HEK293 (cell line): ENCODE measurements at regions of chr19 and their contacts with region 1.

Region 1: GRCh38 chr19:11035441-11036377 is 53.6 kb upstream of the LDLR start:
- H3K4me3 ChIP-seq: no peak overlapping the region
- H3K27ac ChIP-seq: no peak overlapping the region
- H3K4me1 ChIP-seq: no peaks in the 10 kb centered on the region
- CTCF ChIP-seq: peak; percentile 84

Region 2: DNA sequence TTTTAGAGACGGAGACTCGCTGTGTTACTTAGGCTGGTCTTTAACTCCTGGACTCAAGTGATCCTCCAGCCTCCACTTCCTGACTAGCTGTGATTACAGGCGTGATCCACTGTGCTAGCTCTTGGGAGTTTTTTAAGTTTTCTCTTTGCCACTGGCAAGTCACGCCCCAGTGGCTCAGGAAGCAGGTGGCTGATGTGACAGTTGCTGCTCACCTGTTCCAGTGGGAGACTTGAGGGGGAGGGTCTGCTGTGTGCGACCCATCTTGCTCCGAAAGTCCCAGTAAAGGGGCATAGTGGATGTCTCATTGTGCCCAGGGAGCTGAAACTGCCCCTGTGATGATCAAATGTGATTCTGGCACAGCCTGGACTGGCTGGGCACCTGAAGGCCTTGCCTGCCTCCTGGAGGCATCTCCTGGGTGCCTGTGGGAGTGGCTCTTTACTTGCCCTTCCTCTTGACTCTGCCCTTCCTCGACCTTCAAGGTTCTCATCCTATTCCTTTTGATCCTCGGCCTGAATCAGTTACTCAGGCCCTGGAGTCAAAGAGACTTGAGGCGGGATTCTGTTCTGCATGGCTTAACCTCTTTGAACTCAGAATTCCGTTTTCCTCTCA is 67.1 kb before region 1 on chr19:
- CTCF ChIA-PET with region 1: no interaction called
- POLR2A ChIA-PET with region 1: no interaction called
- H3K4me3 ChIP-seq: no peak overlapping the region
- H3K27ac ChIP-seq: no peak overlapping the region
- H3K4me1 ChIP-seq: peaks cover 2% of the 10 kb centered on the region; the same call in 1 of the 2 replicates
- CTCF ChIP-seq: no peak

Region 3: GRCh38 chr19:11050323-11051114 is 14.8 kb after region 1 on chr19:
- CTCF ChIA-PET with region 1: interaction called, 14 read pairs
- POLR2A ChIA-PET with region 1: no interaction called
- H3K4me3 ChIP-seq: no peak overlapping the region
- H3K27ac ChIP-seq: no peak overlapping the region
- H3K4me1 ChIP-seq: no peaks in the 10 kb centered on the region
- CTCF ChIP-seq: no peak

Region 4: DNA sequence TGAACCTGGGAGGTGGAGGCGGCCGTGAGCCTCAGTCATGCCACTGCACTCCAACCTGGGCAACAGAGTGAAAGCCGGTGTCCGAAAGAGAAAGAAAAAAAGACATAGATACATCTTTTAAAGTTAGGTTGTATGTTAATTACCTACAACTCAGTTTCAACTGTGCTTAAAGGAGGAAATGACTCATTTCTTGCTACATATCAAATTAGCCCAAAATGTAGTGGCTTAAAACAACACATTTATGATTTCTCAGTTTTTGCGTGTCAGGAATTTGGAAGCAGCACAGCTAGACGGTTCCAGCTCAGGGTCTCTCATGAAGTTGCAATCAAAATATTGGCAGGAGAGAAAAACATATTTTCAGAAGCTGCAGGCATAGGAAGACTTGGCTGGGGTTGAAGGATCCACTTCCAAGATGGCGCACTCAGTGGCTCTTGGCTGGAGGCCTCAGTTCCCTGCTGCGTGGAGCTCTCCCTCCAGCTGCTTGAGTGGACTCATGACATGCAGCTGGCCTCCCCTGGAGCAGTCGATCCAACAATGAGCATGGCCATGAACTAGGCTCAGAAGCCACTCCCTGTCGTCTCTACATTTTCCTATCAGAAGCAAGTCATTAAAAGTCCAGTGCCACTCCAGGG is 60.6 kb after region 1 on chr19:
- CTCF ChIA-PET with region 1: interaction called, 18 read pairs
- POLR2A ChIA-PET with region 1: interaction called, 4 read pairs
- H3K4me3 ChIP-seq: no peak overlapping the region
- H3K27ac ChIP-seq: no peak overlapping the region
- H3K4me1 ChIP-seq: 0 out of 2 replicates have a peak, but pooled peaks cover 3% of the 10 kb centered on the region
- CTCF ChIP-seq: no peak

Region 5: DNA sequence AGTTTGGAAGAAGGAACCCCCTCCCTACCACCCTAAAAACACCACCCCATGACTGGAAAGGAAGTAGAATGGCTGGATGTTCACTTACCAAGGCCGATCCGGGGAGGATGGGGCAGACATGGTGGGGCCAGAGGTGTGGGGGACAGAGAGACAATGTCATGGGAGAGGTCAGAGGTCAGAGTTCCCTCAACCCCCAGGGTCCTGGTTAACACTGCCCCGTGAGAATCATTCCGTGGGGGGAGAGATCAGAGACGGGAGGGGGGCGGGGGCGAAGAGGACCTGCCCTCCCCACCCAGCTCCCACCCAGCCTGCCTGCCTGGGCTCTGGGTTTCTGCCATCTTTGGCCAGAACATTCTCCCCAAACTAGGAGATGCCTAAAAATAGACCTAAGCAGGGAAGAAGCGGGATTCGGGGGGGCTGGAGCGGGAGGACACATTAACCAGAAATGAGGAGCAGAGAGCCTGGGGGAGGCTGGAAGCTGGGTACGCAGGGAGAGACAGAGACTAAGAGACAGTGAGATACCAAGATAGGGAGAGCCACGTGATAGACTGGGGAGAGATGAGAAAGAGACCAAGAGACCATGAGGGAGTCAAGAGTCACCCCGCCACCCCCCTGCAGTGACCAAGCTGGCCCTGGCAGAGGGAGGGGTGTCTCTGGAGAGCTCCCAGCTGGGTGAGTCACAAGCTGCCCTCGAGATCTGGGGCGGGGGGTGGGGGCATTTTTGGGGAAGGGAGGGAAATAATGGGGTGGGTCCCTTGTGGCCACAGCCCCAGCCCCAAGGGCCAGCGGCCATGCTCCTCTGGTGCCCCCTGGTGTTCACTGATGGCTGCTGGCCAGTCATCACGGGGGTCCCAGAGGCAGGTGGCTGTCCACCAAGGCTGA is 167.7 kb after region 1 on chr19:
- CTCF ChIA-PET with region 1: interaction called, 13 read pairs
- POLR2A ChIA-PET with region 1: no interaction called
- H3K4me3 ChIP-seq: no peak overlapping the region
- H3K27ac ChIP-seq: no peak overlapping the region
- H3K4me1 ChIP-seq: 0 out of 2 replicates have a peak, but pooled peaks cover 2% of the 10 kb centered on the region
- CTCF ChIP-seq: peak; percentile 70